B cell (primary cell): ENCODE measurements at regions of chr1 and their contacts with region 1.

Region 1: GRCh38 chr1:222009105-222009730 is 267.3 kb upstream of the DUSP10 start:
- DNase-seq: peak; percentile 67
- ATAC-seq: peak; percentile 54
- H3K4me3 ChIP-seq: peak overlapping the region in 2 of 5 experiments; percentile 5 to 13
- H3K4me3 Mint-ChIP-seq: no peak overlapping the region
- H3K27ac ChIP-seq: no peak overlapping the region
- H3K27ac Mint-ChIP-seq: no peak overlapping the region
- H3K4me1 ChIP-seq: peaks cover 0 to 4% of the 10 kb centered on the region in 2 donors
- H3K4me1 Mint-ChIP-seq: no peaks in the 10 kb centered on the region
- H3K27me3 ChIP-seq: no peaks in the 10 kb centered on the region
- H3K27me3 Mint-ChIP-seq: no peaks in the 10 kb centered on the region
- CTCF ChIP-seq: peak; percentile 70

Region 2: DNA sequence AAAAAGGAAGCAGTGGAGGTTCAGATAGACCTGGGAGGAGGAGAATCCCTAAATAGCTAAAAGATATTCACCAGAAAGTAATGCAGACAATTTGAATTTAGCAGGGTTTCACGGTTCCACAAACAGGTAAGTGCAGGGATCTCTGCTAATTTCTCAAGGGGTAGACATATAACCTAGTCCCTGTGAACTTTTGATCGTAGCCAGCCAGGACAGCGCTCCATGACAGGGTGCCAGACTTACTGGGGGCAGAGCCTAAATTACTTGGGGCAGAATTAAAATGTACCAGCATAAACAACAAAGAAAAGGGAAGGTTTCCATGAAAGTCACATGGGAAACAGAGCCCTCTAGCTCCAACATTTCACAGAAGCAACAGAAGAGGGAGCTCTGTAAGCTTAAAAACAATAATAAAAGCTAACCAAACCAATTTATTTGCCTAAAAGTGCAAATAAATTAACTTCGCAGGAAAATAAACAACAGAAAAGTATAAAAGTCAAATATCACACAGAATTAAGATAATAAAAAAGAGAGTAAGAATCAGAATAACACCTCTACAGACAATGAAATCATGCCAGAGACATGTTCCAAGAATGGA is 465.6 kb before region 1 on chr1:
- CTCF ChIA-PET with region 1: interaction called, 13 read pairs
- POLR2A ChIA-PET with region 1: no interaction called
- intact Hi-C with region 1: loop called (anchors 1 kb)
- DNase-seq: no peak
- ATAC-seq: no peak
- H3K4me3 ChIP-seq: no peak overlapping the region
- H3K4me3 Mint-ChIP-seq: no peak overlapping the region
- H3K27ac ChIP-seq: no peak overlapping the region
- H3K27ac Mint-ChIP-seq: no peak overlapping the region
- H3K4me1 ChIP-seq: no peaks in the 10 kb centered on the region
- H3K4me1 Mint-ChIP-seq: no peaks in the 10 kb centered on the region
- H3K27me3 ChIP-seq: no peaks in the 10 kb centered on the region
- H3K27me3 Mint-ChIP-seq: peaks cover 15% of the 10 kb centered on the region
- CTCF ChIP-seq: peak; percentile 30

Region 3: DNA sequence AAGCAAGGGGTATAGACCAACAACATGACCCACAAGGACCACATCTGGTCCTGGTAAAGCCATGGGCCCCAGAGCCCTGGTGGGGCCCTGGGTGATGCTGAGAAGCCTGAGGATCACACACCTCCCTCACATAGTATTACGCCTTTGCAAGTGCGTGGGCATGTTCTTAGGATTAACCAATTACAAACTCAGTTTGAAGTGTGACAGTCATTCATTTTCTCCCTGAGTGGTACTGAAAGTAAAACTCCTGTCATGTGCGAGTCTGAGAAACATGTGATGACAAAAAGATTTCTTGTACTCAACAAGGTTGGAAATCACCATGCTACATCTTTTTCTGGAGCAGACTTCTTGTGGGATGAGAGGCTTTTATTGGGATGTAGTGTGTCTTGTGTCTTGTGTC is 47.9 kb after region 1 on chr1:
- CTCF ChIA-PET with region 1: no interaction called
- POLR2A ChIA-PET with region 1: no interaction called
- intact Hi-C with region 1: no loop called
- DNase-seq: no peak
- ATAC-seq: no peak
- H3K4me3 ChIP-seq: no peak overlapping the region
- H3K4me3 Mint-ChIP-seq: no peak overlapping the region
- H3K27ac ChIP-seq: no peak overlapping the region
- H3K27ac Mint-ChIP-seq: no peak overlapping the region
- H3K4me1 ChIP-seq: no peaks in the 10 kb centered on the region
- H3K4me1 Mint-ChIP-seq: no peaks in the 10 kb centered on the region
- H3K27me3 ChIP-seq: no peaks in the 10 kb centered on the region
- H3K27me3 Mint-ChIP-seq: no peaks in the 10 kb centered on the region
- CTCF ChIP-seq: no peak

Region 4: DNA sequence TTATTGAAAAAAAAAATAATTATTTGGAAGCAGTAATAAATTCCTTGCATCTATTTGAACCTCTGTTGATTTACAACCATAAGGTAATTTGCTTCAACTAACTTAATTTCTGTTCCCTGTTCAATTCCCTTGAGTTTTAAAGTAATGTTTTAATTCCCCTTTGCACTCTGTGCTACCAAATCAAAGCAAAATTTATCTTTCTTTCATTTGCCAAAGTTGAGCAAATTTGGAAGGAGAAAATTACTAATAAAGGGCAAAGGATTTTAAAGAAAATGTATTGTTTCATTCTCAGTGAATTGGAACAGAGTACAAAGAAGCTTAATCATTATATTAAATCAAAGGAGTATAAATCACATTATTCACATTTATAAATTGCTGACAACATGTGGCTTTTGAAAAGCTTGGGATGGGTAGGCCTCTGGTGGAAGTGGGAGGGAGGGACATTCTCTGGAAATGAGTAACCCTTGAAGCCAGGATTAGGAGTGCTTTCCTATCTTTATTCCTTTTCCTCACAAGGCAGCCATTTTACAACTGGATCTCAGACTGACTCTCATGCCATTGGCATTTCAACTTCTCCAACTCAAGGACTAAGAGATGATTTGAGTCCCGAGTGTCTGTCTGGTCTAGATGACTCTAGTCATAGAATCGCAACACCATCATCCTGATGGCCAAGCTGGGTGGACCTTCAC is 64.2 kb after region 1 on chr1:
- CTCF ChIA-PET with region 1: no interaction called
- POLR2A ChIA-PET with region 1: no interaction called
- intact Hi-C with region 1: no loop called
- DNase-seq: no peak
- ATAC-seq: no peak
- H3K4me3 ChIP-seq: no peak overlapping the region
- H3K4me3 Mint-ChIP-seq: no peak overlapping the region
- H3K27ac ChIP-seq: no peak overlapping the region
- H3K27ac Mint-ChIP-seq: no peak overlapping the region
- H3K4me1 ChIP-seq: no peaks in the 10 kb centered on the region
- H3K4me1 Mint-ChIP-seq: peaks cover 2% of the 10 kb centered on the region
- H3K27me3 ChIP-seq: peaks cover 0 to under 1% (median 0%) of the 10 kb centered on the region in 4 experiments
- H3K27me3 Mint-ChIP-seq: peaks cover 3% of the 10 kb centered on the region
- CTCF ChIP-seq: no peak